PC-3 (cell line): ENCODE measurements at regions of chr17 and their contacts with region 1.

Region 1: GRCh38 chr17:29369831-29370735 is 20.1 kb upstream of the TAOK1 start:
- DNase-seq: peak; percentile 74
- ATAC-seq: peak; percentile 98
- H3K4me3 ChIP-seq: peak overlapping the region; percentile 53
- H3K27ac ChIP-seq: no peak overlapping the region
- H3K4me1 ChIP-seq: no peaks in the 10 kb centered on the region
- H3K27me3 ChIP-seq: no peaks in the 10 kb centered on the region
- CTCF ChIP-seq: peak; percentile 61

Region 2: DNA sequence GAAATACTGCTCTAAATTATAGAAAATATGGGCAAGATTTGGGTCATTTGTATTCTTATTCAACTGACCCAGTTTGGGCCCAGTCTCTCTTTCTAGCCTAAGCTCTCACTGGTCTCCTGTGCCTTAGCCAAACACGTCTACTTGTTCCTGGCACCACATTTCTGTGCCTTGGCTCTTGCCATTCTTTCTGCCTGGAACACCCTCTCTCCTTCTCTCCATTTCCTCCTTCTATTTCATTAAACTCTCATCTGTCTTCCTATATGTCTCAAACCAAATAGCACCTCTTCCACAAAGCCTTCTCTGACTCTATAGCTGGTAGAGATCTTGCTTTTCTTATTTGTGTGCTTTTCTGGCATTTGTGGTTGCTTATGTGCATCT is 38.4 kb before region 1 on chr17:
- CTCF ChIA-PET with region 1: no interaction called
- POLR2A ChIA-PET with region 1: no interaction called
- intact Hi-C with region 1: no loop called
- DNase-seq: no peak
- ATAC-seq: no peak
- H3K4me3 ChIP-seq: no peak overlapping the region
- H3K27ac ChIP-seq: no peak overlapping the region
- H3K4me1 ChIP-seq: no peaks in the 10 kb centered on the region
- H3K27me3 ChIP-seq: no peaks in the 10 kb centered on the region
- CTCF ChIP-seq: no peak

Region 3: DNA sequence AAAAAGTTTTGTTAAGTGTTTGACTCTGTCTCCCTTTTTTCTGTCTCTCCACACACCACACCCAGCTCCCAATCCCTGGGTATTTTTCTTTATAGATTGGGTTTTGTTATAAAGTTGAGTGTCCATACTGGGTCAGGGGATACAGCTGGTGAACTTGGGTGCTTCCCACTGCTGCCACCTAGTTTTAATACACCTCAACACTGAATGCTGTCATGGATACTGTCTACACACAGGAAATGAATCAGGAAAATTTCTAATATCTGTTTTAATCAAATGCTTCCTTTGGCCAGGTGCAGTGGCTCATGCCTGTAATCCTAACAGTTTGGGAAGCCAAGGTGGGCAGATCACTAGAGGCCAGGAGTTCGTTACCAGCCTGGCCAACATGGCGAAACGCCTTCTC is 14.8 kb after region 1 on chr17:
- CTCF ChIA-PET with region 1: interaction called, 15 read pairs
- POLR2A ChIA-PET with region 1: no interaction called
- intact Hi-C with region 1: no loop called
- DNase-seq: peak; percentile 33
- ATAC-seq: peak; percentile 63; the same call in 1 of the 2 replicates
- H3K4me3 ChIP-seq: no peak overlapping the region
- H3K27ac ChIP-seq: no peak overlapping the region
- H3K4me1 ChIP-seq: no peaks in the 10 kb centered on the region
- H3K27me3 ChIP-seq: no peaks in the 10 kb centered on the region
- CTCF ChIP-seq: peak; percentile 28; the same call in 1 of the 2 replicates

Region 4: GRCh38 chr17:29533976-29534375 is 163.9 kb after region 1 on chr17:
- CTCF ChIA-PET with region 1: interaction called, 13 read pairs
- POLR2A ChIA-PET with region 1: no interaction called
- intact Hi-C with region 1: loop called (anchors 1 kb)
- DNase-seq: no peak
- ATAC-seq: no peak
- H3K4me3 ChIP-seq: no peak overlapping the region
- H3K27ac ChIP-seq: no peak overlapping the region
- H3K4me1 ChIP-seq: no peaks in the 10 kb centered on the region
- H3K27me3 ChIP-seq: no peaks in the 10 kb centered on the region
- CTCF ChIP-seq: no peak